ENCODE measurements at regions of chr19 and their contacts with region 1.

Region 1: DNA sequence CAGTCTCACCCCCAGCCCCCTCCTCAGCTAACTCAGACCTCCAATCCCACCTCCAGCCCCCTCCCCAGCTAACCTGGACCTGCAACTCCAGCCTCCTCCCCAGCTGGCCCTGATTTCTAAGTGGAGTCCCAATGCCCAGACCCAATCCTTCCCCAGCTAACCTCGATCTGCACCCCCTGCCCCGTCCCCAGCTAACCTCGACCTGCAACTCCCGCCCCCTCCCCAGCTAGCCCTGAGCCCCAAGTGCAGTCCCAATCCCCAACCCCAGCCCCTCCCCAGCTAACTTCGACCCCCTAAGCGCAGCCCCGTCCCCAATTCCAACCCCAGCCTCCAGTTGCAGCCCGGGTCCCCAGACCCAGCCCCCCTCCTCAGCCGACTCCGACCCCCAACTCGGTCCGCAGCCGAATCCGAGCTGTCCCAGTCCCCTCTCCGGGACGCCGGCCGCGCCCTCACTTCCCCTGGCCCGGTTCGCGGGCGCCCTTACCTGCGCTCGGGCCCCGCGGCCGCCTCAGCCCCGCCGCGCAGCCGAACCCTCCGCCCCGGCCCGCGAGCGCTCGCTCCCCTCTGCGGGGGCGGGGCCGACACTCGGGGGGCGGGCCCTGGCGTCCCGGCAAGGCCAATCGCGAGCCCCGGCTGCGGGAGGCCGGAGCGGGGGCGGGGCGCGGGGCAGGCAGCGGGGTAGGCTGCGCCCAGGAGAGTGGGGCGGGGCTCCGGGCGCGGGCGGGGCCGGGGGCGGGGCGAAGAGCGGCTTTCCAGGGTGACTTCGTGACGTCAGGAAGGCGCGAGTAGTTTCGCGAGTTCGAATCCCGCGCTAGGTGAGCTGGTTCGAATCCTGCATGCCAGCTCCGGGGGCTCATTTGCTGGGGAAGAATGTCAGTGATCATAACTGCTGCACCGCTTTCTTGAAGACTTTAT is at the start of gene GNG7:
- DNase-seq: peak; percentile 99
- ATAC-seq: peak; percentile 100
- H3K4me3 Mint-ChIP-seq: peak within 1 kb of the TSS; percentile 60
- H3K27ac Mint-ChIP-seq: peak within 1 kb of the TSS; percentile 74
- H3K4me1 Mint-ChIP-seq: peaks cover 24% of the 10 kb centered on the region
- H3K27me3 Mint-ChIP-seq: no peaks in the 10 kb centered on the region
- total RNA-seq, gene GNG7: 1.1 to 1.2 TPM

Region 2: GRCh38 chr19:2027361-2027760 is 675.1 kb before region 1 on chr19:
- CTCF ChIA-PET with region 1: no interaction called
- POLR2A ChIA-PET with region 1: no interaction called
- intact Hi-C with region 1: no loop called
- DNase-seq: no peak
- ATAC-seq: no peak
- H3K4me3 Mint-ChIP-seq: no peak overlapping the region
- H3K27ac Mint-ChIP-seq: no peak overlapping the region
- H3K4me1 Mint-ChIP-seq: peaks cover 7% of the 10 kb centered on the region
- H3K27me3 Mint-ChIP-seq: no peaks in the 10 kb centered on the region

Region 3: GRCh38 chr19:2648528-2648937 is 53.9 kb before region 1 on chr19:
- CTCF ChIA-PET with region 1: interaction called, 15 read pairs
- POLR2A ChIA-PET with region 1: no interaction called
- intact Hi-C with region 1: no loop called
- DNase-seq: peak; percentile 85
- ATAC-seq: peak; percentile 89
- H3K4me3 Mint-ChIP-seq: no peak overlapping the region
- H3K27ac Mint-ChIP-seq: no peak overlapping the region
- H3K4me1 Mint-ChIP-seq: no peaks in the 10 kb centered on the region
- H3K27me3 Mint-ChIP-seq: no peaks in the 10 kb centered on the region

Region 4: GRCh38 chr19:2691951-2692350 is 10.5 kb before region 1 on chr19:
- CTCF ChIA-PET with region 1: no interaction called
- POLR2A ChIA-PET with region 1: no interaction called
- intact Hi-C with region 1: no loop called
- DNase-seq: no peak
- ATAC-seq: no peak
- H3K4me3 Mint-ChIP-seq: no peak overlapping the region
- H3K27ac Mint-ChIP-seq: no peak overlapping the region
- H3K4me1 Mint-ChIP-seq: no peaks in the 10 kb centered on the region
- H3K27me3 Mint-ChIP-seq: no peaks in the 10 kb centered on the region

Region 5: GRCh38 chr19:2820112-2820702 is 117.8 kb after region 1 on chr19:
- CTCF ChIA-PET with region 1: no interaction called
- POLR2A ChIA-PET with region 1: no interaction called
- intact Hi-C with region 1: loop called in 1 of 2 experiments (anchors 1 kb)
- DNase-seq: peak; percentile 31
- ATAC-seq: no peak
- H3K4me3 Mint-ChIP-seq: peak overlapping the region; percentile 78
- H3K27ac Mint-ChIP-seq: peak overlapping the region; percentile 31
- H3K4me1 Mint-ChIP-seq: peaks cover 12% of the 10 kb centered on the region
- H3K27me3 Mint-ChIP-seq: no peaks in the 10 kb centered on the region

Region 6: DNA sequence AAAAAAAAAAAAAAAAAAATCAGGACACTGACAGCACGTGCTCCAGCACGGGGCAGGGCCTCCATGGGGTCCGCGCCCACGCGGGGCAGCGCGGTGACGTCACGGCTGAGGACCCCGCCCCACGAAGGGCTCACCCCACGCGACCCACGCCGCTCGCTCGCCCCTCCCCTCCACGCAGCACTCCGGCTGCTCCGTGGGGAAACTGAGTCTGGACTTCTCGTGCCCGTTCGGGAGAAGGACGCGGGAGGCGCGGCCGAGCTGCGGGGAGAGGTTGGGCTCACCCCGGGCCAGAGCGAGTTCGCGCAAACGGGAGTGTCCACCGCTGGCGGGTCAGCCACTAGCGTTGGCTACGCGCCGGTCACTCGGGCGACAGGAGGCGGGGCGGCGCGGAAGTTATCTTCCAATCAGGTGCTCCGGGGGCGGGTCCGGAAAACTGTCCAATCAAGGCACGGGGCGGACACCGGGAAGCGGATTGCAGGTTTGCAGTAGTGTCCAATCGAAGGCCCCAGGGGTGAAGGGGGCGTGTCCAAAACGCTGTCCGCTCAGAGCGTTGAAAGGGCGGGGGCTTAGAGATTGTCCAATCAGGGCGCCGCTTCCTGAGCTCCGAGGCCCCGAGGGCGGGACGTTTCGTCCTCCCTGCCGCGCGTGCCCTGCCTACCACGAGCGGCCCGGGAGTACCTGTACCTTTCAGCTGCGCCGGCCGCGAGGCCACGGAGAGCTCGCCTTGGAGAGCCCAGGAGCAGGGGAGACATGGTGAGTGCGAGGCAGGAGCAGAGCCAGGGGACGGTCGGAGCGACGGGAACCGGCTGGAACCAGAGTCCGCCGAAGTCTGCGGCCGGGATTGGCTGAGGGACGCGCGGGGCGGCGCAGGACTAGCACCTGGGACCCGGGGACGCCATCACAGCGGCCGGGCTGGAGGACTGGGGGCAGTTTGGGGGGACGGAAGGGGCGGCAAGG is 198.2 kb after region 1 on chr19 and contains the start of gene ZNF57:
- CTCF ChIA-PET with region 1: no interaction called
- POLR2A ChIA-PET with region 1: no interaction called
- intact Hi-C with region 1: loop called in 1 of 2 experiments (anchors 1 kb)
- DNase-seq: peak; percentile 100
- ATAC-seq: peak; percentile 99
- H3K4me3 Mint-ChIP-seq: peak within 1 kb of the TSS; percentile 98
- H3K27ac Mint-ChIP-seq: peak within 1 kb of the TSS; percentile 96
- H3K4me1 Mint-ChIP-seq: peaks cover 18% of the 10 kb centered on the region
- H3K27me3 Mint-ChIP-seq: no peaks in the 10 kb centered on the region
- total RNA-seq, gene ZNF57: 5.9 to 7.1 TPM

Region 7: DNA sequence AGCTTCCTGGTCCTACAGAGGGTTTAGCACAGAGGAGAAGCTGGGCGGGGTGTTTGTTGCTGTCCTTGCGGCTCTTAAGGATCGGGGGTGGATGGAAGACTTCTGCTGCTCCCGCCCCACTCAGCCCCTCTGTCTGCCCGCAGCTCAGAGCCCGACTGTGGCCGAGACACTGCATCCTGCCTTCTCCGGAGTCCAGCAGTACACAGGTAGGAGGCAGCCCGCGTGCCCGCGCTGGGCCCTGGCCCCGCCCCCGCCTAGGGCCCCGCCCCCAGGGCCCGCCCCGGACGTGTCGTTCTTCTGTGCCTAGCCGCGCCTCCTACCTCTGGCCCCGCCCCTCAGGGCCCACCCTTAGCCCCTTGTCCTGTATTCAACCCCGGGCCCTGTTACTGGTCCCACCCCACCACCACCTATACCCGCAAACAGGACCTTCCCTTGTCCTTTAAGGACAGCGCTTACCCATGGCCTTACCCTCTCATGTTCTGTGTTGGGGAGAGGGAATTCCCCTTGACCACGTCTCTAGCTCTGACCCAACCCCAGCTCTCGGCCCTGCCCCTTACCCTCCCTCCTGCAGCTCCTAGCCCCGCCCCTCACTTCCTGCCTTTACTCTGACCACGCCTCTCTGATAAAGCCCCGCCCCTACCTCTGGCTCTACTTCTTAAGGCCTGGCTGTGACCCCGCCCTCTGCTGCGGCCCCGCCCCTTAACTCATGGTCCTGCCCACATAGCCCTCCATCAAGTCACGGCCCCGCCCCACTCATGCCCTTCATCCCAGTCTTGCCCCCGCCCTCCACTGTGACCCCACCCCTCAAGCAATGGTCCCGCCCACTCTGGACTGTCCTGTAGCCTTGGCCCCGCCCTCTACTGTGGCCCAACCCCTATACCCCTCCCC is 582.6 kb after region 1 on chr19:
- CTCF ChIA-PET with region 1: no interaction called
- POLR2A ChIA-PET with region 1: no interaction called
- intact Hi-C with region 1: loop called in 1 of 2 experiments (anchors 2 kb)
- DNase-seq: peak; percentile 94
- ATAC-seq: peak; percentile 91
- H3K4me3 Mint-ChIP-seq: peak overlapping the region; percentile 51
- H3K27ac Mint-ChIP-seq: no peak overlapping the region
- H3K4me1 Mint-ChIP-seq: peaks cover 12% of the 10 kb centered on the region
- H3K27me3 Mint-ChIP-seq: peaks cover 19% of the 10 kb centered on the region

Measured in activated CD4-positive, alpha-beta T cell treated with anti-CD3 and anti-CD28 coated beads for 36 hours (primary cell).